ENCODE measurements at regions of chr7 and their contacts with region 1.

Region 1: DNA sequence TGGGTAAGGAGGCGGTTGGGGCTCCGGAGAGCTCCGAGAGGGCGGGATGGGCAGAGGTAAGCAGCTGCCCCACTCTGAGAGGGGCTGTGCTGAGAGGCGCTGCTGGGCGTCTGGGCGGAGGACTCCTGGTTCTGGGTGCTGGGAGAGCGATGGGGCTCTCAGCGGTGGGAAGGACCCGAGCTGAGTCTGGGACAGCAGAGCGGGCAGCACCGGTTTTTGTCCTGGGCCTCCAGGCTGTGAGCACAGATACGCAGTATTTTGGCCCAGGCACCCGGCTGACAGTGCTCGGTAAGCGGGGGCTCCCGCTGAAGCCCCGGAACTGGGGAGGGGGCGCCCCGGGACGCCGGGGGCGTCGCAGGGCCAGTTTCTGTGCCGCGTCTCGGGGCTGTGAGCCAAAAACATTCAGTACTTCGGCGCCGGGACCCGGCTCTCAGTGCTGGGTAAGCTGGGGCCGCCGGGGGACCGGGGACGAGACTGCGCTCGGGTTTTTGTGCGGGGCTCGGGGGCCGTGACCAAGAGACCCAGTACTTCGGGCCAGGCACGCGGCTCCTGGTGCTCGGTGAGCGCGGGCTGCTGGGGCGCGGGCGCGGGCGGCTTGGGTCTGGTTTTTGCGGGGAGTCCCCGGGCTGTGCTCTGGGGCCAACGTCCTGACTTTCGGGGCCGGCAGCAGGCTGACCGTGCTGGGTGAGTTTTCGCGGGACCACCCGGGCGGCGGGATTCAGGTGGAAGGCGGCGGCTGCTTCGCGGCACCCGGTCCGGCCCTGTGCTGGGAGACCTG is 26.0 kb downstream of the PRSS2 start:
- DNase-seq: peak; percentile 35 to 36
- H3K4me3 ChIP-seq: peak overlapping the region; percentile 93
- H3K27ac ChIP-seq: peak overlapping the region; percentile 92
- H3K4me1 ChIP-seq: peaks cover 55% of the 10 kb centered on the region
- H3K27me3 ChIP-seq: no peaks in the 10 kb centered on the region
- CTCF ChIP-seq: no peak

Region 2: GRCh38 chr7:142811154-142811737 is 14.4 kb after region 1 on chr7:
- CTCF ChIA-PET with region 1: interaction called, 6 read pairs
- POLR2A ChIA-PET with region 1: interaction called, 11 read pairs
- intact Hi-C with region 1: loop called (anchors 1 kb)
- DNase-seq: peak; percentile 22 to 78
- H3K4me3 ChIP-seq: no peak overlapping the region
- H3K27ac ChIP-seq: peak overlapping the region; percentile 96
- H3K4me1 ChIP-seq: peaks cover 84% of the 10 kb centered on the region
- H3K27me3 ChIP-seq: no peaks in the 10 kb centered on the region
- CTCF ChIP-seq: peak; percentile 95

Measured in PC-9 (cell line).